ENCODE measurements at regions of chr6 and their contacts with region 1.

Region 1: GRCh38 chr6:151451950-151452749 is at the start of gene RMND1:
- DNase-seq: peak; percentile 100
- H3K4me3 ChIP-seq: peak within 1 kb of the TSS; percentile 78 to 95 (median 86)
- H3K27ac ChIP-seq: peak within 1 kb of the TSS; percentile 90 to 96 (median 96)
- H3K4me1 ChIP-seq: peaks cover 22 to 43% (median 34%) of the 10 kb centered on the region in 4 donors
- H3K27me3 ChIP-seq: no peaks in the 10 kb centered on the region
- CTCF ChIP-seq: no peak
- EP300 ChIP-seq: no peak
- POLR2A ChIP-seq: peak; percentile 36
- total RNA-seq, gene RMND1: 9.9 to 18.7 (median 12.1) TPM

Region 2: GRCh38 chr6:151390276-151391032 is 61.7 kb before region 1 on chr6:
- intact Hi-C with region 1: loop called (anchors 2 kb)
- DNase-seq: peak; percentile 98
- H3K4me3 ChIP-seq: peak overlapping the region; percentile 76 to 99 (median 94)
- H3K27ac ChIP-seq: peak overlapping the region; percentile 99 to 100 (median 100)
- H3K4me1 ChIP-seq: peaks cover 51 to 60% (median 56%) of the 10 kb centered on the region in 4 donors
- H3K27me3 ChIP-seq: peaks cover 0 to 6% (median 0%) of the 10 kb centered on the region in 4 donors
- CTCF ChIP-seq: no peak
- EP300 ChIP-seq: no peak
- POLR2A ChIP-seq: peak; percentile 51

Region 3: GRCh38 chr6:151506761-151507160 is 54.6 kb after region 1 on chr6:
- intact Hi-C with region 1: no loop called
- DNase-seq: no peak
- H3K4me3 ChIP-seq: no peak overlapping the region
- H3K27ac ChIP-seq: no peak overlapping the region
- H3K4me1 ChIP-seq: no peaks in the 10 kb centered on the region
- H3K27me3 ChIP-seq: no peaks in the 10 kb centered on the region
- CTCF ChIP-seq: no peak
- EP300 ChIP-seq: no peak
- POLR2A ChIP-seq: no peak

Region 4: GRCh38 chr6:151524059-151524458 is 71.9 kb after region 1 on chr6:
- intact Hi-C with region 1: no loop called
- DNase-seq: no peak
- H3K4me3 ChIP-seq: no peak overlapping the region
- H3K27ac ChIP-seq: no peak overlapping the region
- H3K4me1 ChIP-seq: no peaks in the 10 kb centered on the region
- H3K27me3 ChIP-seq: no peaks in the 10 kb centered on the region
- CTCF ChIP-seq: no peak
- EP300 ChIP-seq: no peak
- POLR2A ChIP-seq: no peak

Measured in esophagus muscularis mucosa (tissue), 4 donors.